ENCODE measurements at regions of chr4 and their contacts with region 1.

Region 1: GRCh38 chr4:20773144-20773997 is 73.1 kb downstream of the PACRGL start:
- DNase-seq: no peak
- ATAC-seq: no peak

Region 2: DNA sequence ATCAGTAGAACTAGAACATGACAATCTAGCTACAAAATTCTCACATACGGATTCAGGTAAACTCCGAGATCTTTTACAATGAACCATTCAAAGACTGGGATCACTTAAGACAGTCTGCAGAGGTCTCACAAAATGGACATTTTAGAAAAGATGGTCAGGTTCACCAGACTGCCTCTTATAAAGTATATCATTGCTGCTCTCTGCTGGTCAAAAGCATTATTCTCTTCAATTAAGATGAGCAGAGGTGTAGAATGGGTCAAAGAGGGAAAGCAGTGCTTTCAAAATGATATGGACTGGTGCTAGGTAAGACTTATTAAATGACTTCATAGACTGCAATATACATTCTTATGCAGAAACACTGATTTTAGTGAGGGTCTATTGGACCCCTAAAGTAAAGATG is 361.6 kb after region 1 on chr4:
- intact Hi-C with region 1: loop called (anchors 5 kb)
- DNase-seq: no peak
- ATAC-seq: no peak

Region 3: DNA sequence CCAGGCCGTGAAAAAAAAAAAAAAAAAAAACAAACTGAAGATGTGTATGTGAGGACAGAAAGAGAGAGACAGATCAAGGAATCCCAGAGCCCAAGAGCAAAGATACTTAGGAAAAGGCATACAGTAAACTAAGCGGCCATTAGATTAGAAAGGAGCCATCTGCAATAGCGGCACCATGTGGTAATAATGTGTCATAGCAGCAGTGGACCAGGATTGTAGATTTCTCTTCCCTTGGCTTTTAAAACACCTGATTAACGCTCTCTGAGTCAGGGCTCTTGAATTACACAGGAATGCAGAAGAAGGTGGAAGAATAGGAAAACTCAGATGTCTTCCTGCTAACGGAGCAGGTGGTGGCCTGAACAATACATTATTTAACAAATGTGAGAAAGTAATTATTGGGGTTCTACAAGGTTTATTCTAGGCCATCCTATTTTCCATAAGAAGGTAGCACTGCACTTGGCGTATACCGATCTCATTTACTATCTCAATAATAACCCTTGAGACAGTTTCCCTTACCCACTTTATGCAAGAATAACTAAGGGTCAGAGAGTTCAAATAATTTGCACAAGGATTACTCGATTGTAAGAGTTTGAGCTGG is 992.5 kb after region 1 on chr4:
- intact Hi-C with region 1: loop called (anchors 10 kb)
- DNase-seq: no peak
- ATAC-seq: peak; percentile 39